Right ventricle myocardium inferior (tissue), 1 donor: ENCODE measurements at regions of chr1 and their contacts with region 1.

Region 1: DNA sequence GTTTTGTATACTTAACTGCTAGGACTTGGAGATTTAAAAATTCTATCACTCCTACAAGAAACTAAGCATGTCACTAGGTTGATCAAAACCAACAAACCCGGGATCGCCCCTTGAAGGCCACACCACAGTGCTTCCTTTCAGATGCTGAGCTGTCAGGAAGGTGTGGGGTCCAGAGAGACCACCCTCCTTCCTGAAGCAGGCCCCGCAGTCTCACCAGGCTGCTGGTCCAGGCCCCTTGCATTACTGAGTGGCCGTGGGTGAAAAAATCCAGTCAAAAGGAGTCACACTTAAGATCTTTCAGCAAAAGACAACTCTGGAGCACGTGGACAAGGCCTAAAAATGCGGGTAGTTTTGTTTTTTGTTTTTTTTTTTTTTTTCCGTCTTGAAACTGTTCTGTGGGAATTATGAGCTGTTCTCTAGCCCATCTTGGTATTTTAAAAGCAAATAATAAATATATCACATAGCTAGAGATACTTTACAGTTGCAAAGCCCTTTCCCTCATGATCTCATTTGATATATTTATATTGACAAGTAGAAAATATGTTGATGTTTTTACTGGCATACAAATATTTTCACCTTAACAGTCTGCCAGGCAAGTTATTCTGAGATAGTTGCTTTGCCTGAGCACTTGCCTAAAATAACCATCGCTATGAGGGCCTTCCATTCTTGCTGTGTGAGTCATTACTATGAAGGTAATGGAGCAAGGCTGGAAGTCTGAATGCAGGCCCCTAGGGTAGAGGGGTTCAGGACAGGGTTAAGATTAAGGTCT is 73.1 kb upstream of the EDEM3 start:
- DNase-seq: no peak
- ATAC-seq: peak; percentile 65

Region 2: GRCh38 chr1:184892116-184892515 is 64.3 kb after region 1 on chr1:
- intact Hi-C with region 1: loop called (anchors 5 kb)
- DNase-seq: no peak
- ATAC-seq: no peak

Region 3: GRCh38 chr1:185360714-185361113 is 532.9 kb after region 1 on chr1:
- intact Hi-C with region 1: no loop called
- DNase-seq: no peak
- ATAC-seq: no peak